ENCODE measurements at regions of chr17 and their contacts with region 1.

Region 1: DNA sequence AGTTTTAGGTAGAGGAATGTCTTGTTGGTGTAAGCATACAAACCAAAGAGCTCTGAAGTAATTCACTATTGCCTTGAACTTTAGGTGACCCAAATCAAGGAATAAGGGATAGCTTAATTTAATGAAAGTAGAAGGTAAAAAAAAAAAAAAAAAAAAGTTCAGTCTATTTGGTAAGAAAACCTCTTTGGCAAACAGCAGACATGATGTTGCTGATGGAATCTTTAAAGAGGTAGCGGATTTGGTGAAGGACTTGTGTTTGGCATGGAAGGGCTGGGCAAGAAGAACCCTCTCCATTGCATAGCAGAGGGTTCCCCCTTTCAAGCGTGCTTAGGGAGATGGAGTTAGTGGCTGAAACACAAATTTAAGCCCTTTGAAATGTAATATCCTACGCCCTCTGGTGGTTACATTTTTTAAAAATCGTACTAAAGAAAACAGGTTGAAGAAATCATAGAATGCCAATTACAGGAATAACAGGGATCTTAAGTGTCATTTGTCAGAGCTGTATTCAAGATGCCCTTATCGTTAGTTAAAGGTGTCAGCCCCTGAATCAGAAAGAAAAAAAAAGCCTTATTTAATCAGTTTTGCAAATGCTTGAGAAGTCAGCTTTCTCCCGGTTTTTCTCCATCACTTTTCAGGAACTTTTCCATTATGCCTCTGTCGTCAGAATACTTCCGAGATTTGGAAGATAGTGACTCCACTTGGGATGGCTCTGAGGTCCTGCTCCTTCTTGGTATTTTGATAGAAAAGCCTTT is 383.1 kb downstream of the KCNJ2 start:
- DNase-seq: no peak
- H3K4me3 ChIP-seq: peak overlapping the region; percentile 28
- H3K27ac ChIP-seq: peak overlapping the region; percentile 17
- H3K4me1 ChIP-seq: peaks cover 3% of the 10 kb centered on the region
- H3K27me3 ChIP-seq: no peaks in the 10 kb centered on the region
- CTCF ChIP-seq: peak; percentile 61

Region 2: DNA sequence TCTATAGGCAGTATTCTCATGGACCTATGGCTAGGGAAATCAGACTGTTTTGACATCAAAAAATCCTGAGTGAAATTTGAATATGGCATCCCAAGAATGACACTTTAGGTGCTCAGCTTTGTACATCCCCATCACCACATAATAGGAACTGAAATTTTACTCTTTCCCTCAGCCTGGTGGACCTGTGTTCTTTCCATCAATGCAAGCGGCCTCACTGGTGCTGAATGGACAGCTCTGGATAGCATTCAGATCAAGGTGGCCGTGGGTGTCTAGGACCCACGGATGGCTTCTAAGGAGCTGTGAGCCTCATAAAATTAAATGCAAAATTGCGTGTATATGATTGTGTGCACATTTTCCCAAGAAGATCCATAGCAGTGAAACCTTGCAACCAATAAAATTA is 985.3 kb before region 1 on chr17:
- intact Hi-C with region 1: loop called (anchors 10 kb)
- DNase-seq: no peak
- H3K4me3 ChIP-seq: no peak overlapping the region
- H3K27ac ChIP-seq: no peak overlapping the region
- H3K4me1 ChIP-seq: no peaks in the 10 kb centered on the region
- H3K27me3 ChIP-seq: no peaks in the 10 kb centered on the region
- CTCF ChIP-seq: no peak

Measured in left ventricle myocardium inferior (tissue), 1 donor.